ENCODE measurements at regions of chr17 and their contacts with region 1.

Region 1: DNA sequence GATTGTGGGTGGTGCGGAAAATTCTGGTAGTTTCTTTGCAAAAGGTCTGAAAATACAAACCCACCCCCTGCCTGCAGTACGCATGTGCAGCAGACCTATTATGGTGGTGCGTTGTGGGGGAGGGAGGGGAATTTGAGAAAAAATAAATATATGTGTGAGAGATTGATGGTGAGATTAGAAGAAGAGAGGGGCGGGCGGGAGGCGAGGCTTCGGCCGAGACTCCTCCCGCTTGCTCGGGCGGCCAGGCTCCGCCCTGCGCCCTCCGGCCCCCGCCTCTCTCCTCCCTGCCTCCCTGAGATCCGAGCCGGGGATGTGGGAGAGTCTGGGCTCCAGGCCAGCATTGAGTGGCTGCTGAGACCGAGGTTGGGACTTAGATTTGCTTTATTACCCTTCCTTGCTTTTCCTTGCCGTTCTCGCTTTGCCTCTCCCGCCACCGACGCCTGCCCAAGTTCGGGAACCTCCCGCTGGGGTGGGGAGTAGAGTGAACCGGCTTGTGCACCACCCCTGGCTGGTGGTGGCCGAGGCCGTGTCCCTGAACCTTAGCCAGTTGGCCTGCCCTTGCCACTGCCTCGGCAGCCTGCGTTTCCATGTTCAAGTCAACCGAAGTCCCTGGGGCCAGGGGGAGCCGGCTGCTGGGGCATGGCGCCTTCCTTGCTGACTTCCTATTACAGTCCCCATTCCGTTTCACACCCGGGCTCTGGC is 956 bp upstream of the CHD3 start:
- DNase-seq: peak; percentile 91 to 94
- ATAC-seq: peak; percentile 85 to 93 (median 88)
- H3K4me3 ChIP-seq: peak overlapping the region; percentile 23 to 96 (median 78)
- H3K27ac ChIP-seq: peak overlapping the region; percentile 72 to 98 (median 92)
- H3K4me1 ChIP-seq: peaks cover 19 to 68% (median 50%) of the 10 kb centered on the region in 9 donors
- H3K27me3 ChIP-seq: no peaks in the 10 kb centered on the region
- CTCF ChIP-seq: peak in 1 of 9 donors; percentile 14

Region 2: GRCh38 chr17:7774037-7774659 is 113.5 kb before region 1 on chr17:
- intact Hi-C with region 1: no loop called
- DNase-seq: no peak
- ATAC-seq: no peak
- H3K4me3 ChIP-seq: no peak overlapping the region
- H3K27ac ChIP-seq: no peak overlapping the region
- H3K4me1 ChIP-seq: no peaks in the 10 kb centered on the region
- H3K27me3 ChIP-seq: peaks cover 0 to 30% (median 7%) of the 10 kb centered on the region in 7 donors
- CTCF ChIP-seq: no peak

Region 3: GRCh38 chr17:7825206-7825990 is 62.2 kb before region 1 on chr17:
- intact Hi-C with region 1: loop called in 5 of 10 experiments (anchors 2 to 10 kb)
- DNase-seq: no peak
- ATAC-seq: peak in 1 of 8 donors; percentile 20
- H3K4me3 ChIP-seq: no peak overlapping the region
- H3K27ac ChIP-seq: no peak overlapping the region
- H3K4me1 ChIP-seq: peaks cover 0 to 7% (median 0%) of the 10 kb centered on the region in 9 donors
- H3K27me3 ChIP-seq: peaks cover 0 to 5% (median 0%) of the 10 kb centered on the region in 7 donors
- CTCF ChIP-seq: peak in 4 of 9 donors; percentile 23 to 29 (median 26)

Region 4: GRCh38 chr17:7834962-7835813 is 52.4 kb before region 1 on chr17:
- intact Hi-C with region 1: loop called in 1 of 10 experiments (anchors 5 kb)
- DNase-seq: peak; percentile 97 to 99
- ATAC-seq: peak; percentile 79 to 83 (median 82)
- H3K4me3 ChIP-seq: peak overlapping the region; percentile 59 to 95 (median 80)
- H3K27ac ChIP-seq: peak overlapping the region; percentile 94 to 100 (median 98)
- H3K4me1 ChIP-seq: peaks cover 7 to 48% (median 42%) of the 10 kb centered on the region in 9 donors
- H3K27me3 ChIP-seq: peaks cover 0 to 3% (median 0%) of the 10 kb centered on the region in 7 donors
- CTCF ChIP-seq: peak; percentile 71 to 93 (median 81)

Region 5: DNA sequence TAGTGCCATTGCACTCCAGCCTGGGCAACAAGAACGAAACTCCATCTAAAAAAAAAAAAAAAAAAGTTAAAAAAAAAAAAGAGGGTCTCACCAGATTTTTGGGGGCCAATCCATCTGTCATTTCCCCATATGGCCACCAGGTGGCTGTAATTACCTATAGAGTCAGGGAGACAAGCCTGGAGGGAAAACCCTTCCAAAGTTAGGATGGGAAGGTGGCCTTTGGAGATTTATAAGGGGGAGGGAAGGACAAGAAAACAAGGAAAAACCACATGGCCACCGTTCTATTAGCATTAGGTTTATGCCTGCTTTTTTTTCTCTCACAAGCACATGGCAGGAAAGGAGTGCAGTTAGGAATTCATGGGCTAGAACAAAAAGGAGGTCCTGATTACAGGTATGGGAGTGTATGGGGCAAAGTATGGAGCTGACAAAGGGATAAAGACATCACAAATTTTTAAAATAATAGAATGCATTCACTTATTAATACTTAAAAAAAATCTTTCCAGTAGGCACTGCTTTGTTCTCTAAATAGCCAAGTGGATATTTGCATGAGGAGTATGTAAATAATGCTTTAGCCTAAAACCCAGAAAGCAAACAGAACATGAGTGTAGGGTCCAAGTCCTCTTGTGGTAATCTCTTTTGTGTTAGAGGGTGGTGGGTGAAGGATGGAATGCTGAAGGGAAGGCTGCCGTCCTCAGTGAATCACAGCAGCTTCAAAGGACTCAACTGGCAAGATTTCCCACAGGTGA is 24.8 kb before region 1 on chr17:
- intact Hi-C with region 1: loop called in 1 of 10 experiments (anchors 2 kb)
- DNase-seq: peak in 1 of 2 donors; percentile 62
- ATAC-seq: no peak
- H3K4me3 ChIP-seq: no peak overlapping the region
- H3K27ac ChIP-seq: no peak overlapping the region
- H3K4me1 ChIP-seq: peaks cover 0 to 26% (median 14%) of the 10 kb centered on the region in 9 donors
- H3K27me3 ChIP-seq: no peaks in the 10 kb centered on the region
- CTCF ChIP-seq: peak; percentile 65 to 83 (median 81)

Region 6: GRCh38 chr17:7915611-7916382 is 28.2 kb after region 1 on chr17 and contains the start of gene RNF227:
- intact Hi-C with region 1: loop called in 1 of 10 experiments (anchors 2 kb)
- DNase-seq: peak; percentile 91 to 94
- ATAC-seq: peak; percentile 88 to 93 (median 91)
- H3K4me3 ChIP-seq: peak within 1 kb of the TSS; percentile 49 to 93 (median 65)
- H3K27ac ChIP-seq: peak within 1 kb of the TSS; percentile 70 to 98 (median 92)
- H3K4me1 ChIP-seq: peaks cover 3 to 35% (median 26%) of the 10 kb centered on the region in 9 donors
- H3K27me3 ChIP-seq: no peaks in the 10 kb centered on the region
- CTCF ChIP-seq: no peak
- total RNA-seq, gene RNF227: 0.15 to 1.6 (median 0.90) TPM

Region 7: GRCh38 chr17:7931709-7932482 is 44.3 kb after region 1 on chr17 and contains the starts of genes CNTROB and TRAPPC1:
- intact Hi-C with region 1: loop called in 1 of 10 experiments (anchors 5 kb)
- DNase-seq: peak; percentile 99 to 100
- ATAC-seq: peak; percentile 98 to 99 (median 99)
- H3K4me3 ChIP-seq: peak within 1 kb of the TSS; percentile 46 to 94 (median 77)
- H3K27ac ChIP-seq: peak within 1 kb of the TSS in 9 of 10 donors; percentile 49 to 92 (median 79)
- H3K4me1 ChIP-seq: peaks cover 2 to 36% (median 22%) of the 10 kb centered on the region in 9 donors
- H3K27me3 ChIP-seq: no peaks in the 10 kb centered on the region
- CTCF ChIP-seq: no peak
- total RNA-seq, gene CNTROB: 7.8 to 14.4 (median 10.7) TPM
- total RNA-seq, gene TRAPPC1: 104 to 166 (median 121) TPM

Measured in heart right ventricle (tissue), 16 donors.